Naive thymus-derived CD4-positive, alpha-beta T cell (primary cell): ENCODE measurements at regions of chr1 and their contacts with region 1.

Region 1: DNA sequence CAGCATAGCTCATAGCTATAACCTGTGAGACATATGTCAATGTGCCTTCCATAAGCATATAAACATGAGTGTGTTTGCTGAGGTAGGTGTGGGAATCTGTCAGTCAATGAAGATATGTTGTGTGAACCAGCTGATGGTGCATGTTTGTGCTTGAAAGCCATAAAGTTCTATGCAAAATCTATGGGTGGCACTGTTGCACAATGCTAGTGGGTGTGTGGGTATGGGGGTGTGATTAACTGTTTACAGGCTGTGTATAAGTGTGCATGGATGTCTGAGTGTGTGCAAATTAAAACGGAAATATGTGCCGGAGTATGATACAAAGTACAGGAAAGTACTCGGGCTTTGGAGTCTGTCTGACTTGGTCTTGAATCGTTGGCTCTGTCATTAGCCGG is 1.0 kb upstream of the ATP2B4 start:
- DNase-seq: peak in 8 of 9 donors; percentile 54 to 88 (median 84)
- ATAC-seq: peak; percentile 82
- H3K4me3 ChIP-seq: peak overlapping the region; percentile 71
- H3K4me3 Mint-ChIP-seq: peak overlapping the region; percentile 89 to 100 (median 98)
- H3K27ac ChIP-seq: peak overlapping the region; percentile 82
- H3K27ac Mint-ChIP-seq: peak overlapping the region; percentile 73 to 98 (median 96)
- H3K4me1 ChIP-seq: peaks cover 17% of the 10 kb centered on the region in 2 donors
- H3K4me1 Mint-ChIP-seq: peaks cover 28 to 66% (median 37%) of the 10 kb centered on the region in 7 donors
- H3K27me3 ChIP-seq: no peaks in the 10 kb centered on the region
- H3K27me3 Mint-ChIP-seq: no peaks in the 10 kb centered on the region

Region 2: GRCh38 chr1:202315576-202316168 is 1310.0 kb before region 1 on chr1:
- CTCF ChIA-PET with region 1: no interaction called
- POLR2A ChIA-PET with region 1: no interaction called
- intact Hi-C with region 1: no loop called
- DNase-seq: peak; percentile 42 to 74 (median 64)
- ATAC-seq: peak; percentile 88
- H3K4me3 ChIP-seq: no peak overlapping the region
- H3K4me3 Mint-ChIP-seq: no peak overlapping the region
- H3K27ac ChIP-seq: no peak overlapping the region
- H3K27ac Mint-ChIP-seq: no peak overlapping the region
- H3K4me1 ChIP-seq: no peaks in the 10 kb centered on the region
- H3K4me1 Mint-ChIP-seq: peaks cover 0 to 10% (median 0%) of the 10 kb centered on the region in 7 donors
- H3K27me3 ChIP-seq: no peaks in the 10 kb centered on the region
- H3K27me3 Mint-ChIP-seq: peaks cover 0 to 33% (median 0%) of the 10 kb centered on the region in 5 donors

Region 3: GRCh38 chr1:203273206-203273868 is 352.3 kb before region 1 on chr1:
- CTCF ChIA-PET with region 1: interaction called, 6 read pairs
- POLR2A ChIA-PET with region 1: interaction called, 4 read pairs
- intact Hi-C with region 1: loop called in 1 of 2 experiments (anchors 1 kb)
- DNase-seq: peak; percentile 84 to 95 (median 91)
- ATAC-seq: peak; percentile 82
- H3K4me3 ChIP-seq: peak overlapping the region; percentile 55
- H3K4me3 Mint-ChIP-seq: peak overlapping the region; percentile 76 to 83 (median 80)
- H3K27ac ChIP-seq: peak overlapping the region; percentile 75
- H3K27ac Mint-ChIP-seq: peak overlapping the region; percentile 83 to 98 (median 94)
- H3K4me1 ChIP-seq: peaks cover 11 to 64% of the 10 kb centered on the region in 2 donors
- H3K4me1 Mint-ChIP-seq: peaks cover 20 to 71% (median 65%) of the 10 kb centered on the region in 7 donors
- H3K27me3 ChIP-seq: no peaks in the 10 kb centered on the region
- H3K27me3 Mint-ChIP-seq: no peaks in the 10 kb centered on the region

Region 4: GRCh38 chr1:203299169-203299568 is 326.5 kb before region 1 on chr1:
- CTCF ChIA-PET with region 1: no interaction called
- POLR2A ChIA-PET with region 1: no interaction called
- intact Hi-C with region 1: no loop called
- DNase-seq: no peak
- ATAC-seq: peak; percentile 47
- H3K4me3 ChIP-seq: no peak overlapping the region
- H3K4me3 Mint-ChIP-seq: no peak overlapping the region
- H3K27ac ChIP-seq: no peak overlapping the region
- H3K27ac Mint-ChIP-seq: peak overlapping the region in 6 of 9 donors; percentile 7 to 68 (median 47)
- H3K4me1 ChIP-seq: peaks cover 4 to 8% of the 10 kb centered on the region in 2 donors
- H3K4me1 Mint-ChIP-seq: peaks cover 49 to 81% (median 65%) of the 10 kb centered on the region in 7 donors
- H3K27me3 ChIP-seq: no peaks in the 10 kb centered on the region
- H3K27me3 Mint-ChIP-seq: no peaks in the 10 kb centered on the region

Region 5: GRCh38 chr1:203326830-203327683 is 298.6 kb before region 1 on chr1:
- CTCF ChIA-PET with region 1: no interaction called
- POLR2A ChIA-PET with region 1: interaction called, 7 read pairs
- intact Hi-C with region 1: loop called (anchors 5 kb)
- DNase-seq: peak; percentile 90 to 96 (median 94)
- ATAC-seq: peak; percentile 84
- H3K4me3 ChIP-seq: peak overlapping the region; percentile 72
- H3K4me3 Mint-ChIP-seq: peak overlapping the region; percentile 80 to 89 (median 86)
- H3K27ac ChIP-seq: peak overlapping the region; percentile 98
- H3K27ac Mint-ChIP-seq: peak overlapping the region; percentile 90 to 100 (median 99)
- H3K4me1 ChIP-seq: peaks cover 55 to 56% of the 10 kb centered on the region in 2 donors
- H3K4me1 Mint-ChIP-seq: peaks cover 40 to 73% (median 70%) of the 10 kb centered on the region in 7 donors
- H3K27me3 ChIP-seq: no peaks in the 10 kb centered on the region
- H3K27me3 Mint-ChIP-seq: no peaks in the 10 kb centered on the region

Region 6: DNA sequence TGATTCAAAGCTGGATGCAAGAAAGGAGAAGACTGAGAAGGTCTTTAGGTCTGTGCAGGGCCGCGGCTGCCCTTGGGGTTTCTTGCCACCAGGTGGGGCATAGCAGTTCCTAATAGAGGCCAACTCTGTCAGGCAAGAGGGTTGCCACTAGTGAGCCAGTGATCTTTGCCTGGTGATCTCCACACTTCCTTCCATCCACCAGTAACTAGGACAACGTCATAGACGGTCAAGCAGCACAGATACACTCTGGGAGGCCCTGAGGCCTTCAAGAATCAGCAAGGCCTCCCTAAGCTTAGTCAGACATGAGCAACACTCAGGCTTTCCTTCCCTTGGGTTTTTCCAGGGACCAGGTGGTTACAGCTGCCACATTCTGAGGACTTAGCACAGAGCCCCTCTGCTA is 31.9 kb before region 1 on chr1:
- CTCF ChIA-PET with region 1: interaction called, 11 read pairs
- POLR2A ChIA-PET with region 1: interaction called, 12 read pairs
- intact Hi-C with region 1: loop called (anchors 1 to 5 kb)
- DNase-seq: peak in 7 of 9 donors; percentile 17 to 42 (median 25)
- ATAC-seq: peak; percentile 79
- H3K4me3 ChIP-seq: no peak overlapping the region
- H3K4me3 Mint-ChIP-seq: no peak overlapping the region
- H3K27ac ChIP-seq: no peak overlapping the region
- H3K27ac Mint-ChIP-seq: peak overlapping the region in 4 of 9 donors; percentile 20 to 70 (median 50)
- H3K4me1 ChIP-seq: no peaks in the 10 kb centered on the region
- H3K4me1 Mint-ChIP-seq: peaks cover 0 to 32% (median 7%) of the 10 kb centered on the region in 7 donors
- H3K27me3 ChIP-seq: no peaks in the 10 kb centered on the region
- H3K27me3 Mint-ChIP-seq: peaks cover 0 to 4% (median 0%) of the 10 kb centered on the region in 5 donors

Region 7: GRCh38 chr1:203673550-203674427 is 48.2 kb after region 1 on chr1:
- CTCF ChIA-PET with region 1: interaction called, 18 read pairs
- POLR2A ChIA-PET with region 1: interaction called, 48 read pairs
- intact Hi-C with region 1: loop called (anchors 1 kb)
- DNase-seq: peak; percentile 27 to 79 (median 73)
- ATAC-seq: peak; percentile 91
- H3K4me3 ChIP-seq: no peak overlapping the region
- H3K4me3 Mint-ChIP-seq: peak overlapping the region; percentile 57 to 87 (median 77)
- H3K27ac ChIP-seq: peak overlapping the region; percentile 53
- H3K27ac Mint-ChIP-seq: peak overlapping the region; percentile 87 to 99 (median 95)
- H3K4me1 ChIP-seq: peaks cover 52 to 54% of the 10 kb centered on the region in 2 donors
- H3K4me1 Mint-ChIP-seq: peaks cover 50 to 81% (median 71%) of the 10 kb centered on the region in 7 donors
- H3K27me3 ChIP-seq: no peaks in the 10 kb centered on the region
- H3K27me3 Mint-ChIP-seq: no peaks in the 10 kb centered on the region

Region 8: GRCh38 chr1:203769505-203770343 is 144.1 kb after region 1 on chr1:
- CTCF ChIA-PET with region 1: interaction called, 13 read pairs
- POLR2A ChIA-PET with region 1: interaction called, 6 read pairs
- intact Hi-C with region 1: loop called (anchors 2 kb)
- DNase-seq: no peak
- ATAC-seq: peak; percentile 52
- H3K4me3 ChIP-seq: no peak overlapping the region
- H3K4me3 Mint-ChIP-seq: peak overlapping the region in 7 of 10 donors; percentile 13 to 96 (median 52)
- H3K27ac ChIP-seq: no peak overlapping the region
- H3K27ac Mint-ChIP-seq: peak overlapping the region; percentile 68 to 99 (median 90)
- H3K4me1 ChIP-seq: peaks cover 21% of the 10 kb centered on the region in 2 donors
- H3K4me1 Mint-ChIP-seq: peaks cover 25 to 64% (median 35%) of the 10 kb centered on the region in 7 donors
- H3K27me3 ChIP-seq: no peaks in the 10 kb centered on the region
- H3K27me3 Mint-ChIP-seq: no peaks in the 10 kb centered on the region

Region 9: DNA sequence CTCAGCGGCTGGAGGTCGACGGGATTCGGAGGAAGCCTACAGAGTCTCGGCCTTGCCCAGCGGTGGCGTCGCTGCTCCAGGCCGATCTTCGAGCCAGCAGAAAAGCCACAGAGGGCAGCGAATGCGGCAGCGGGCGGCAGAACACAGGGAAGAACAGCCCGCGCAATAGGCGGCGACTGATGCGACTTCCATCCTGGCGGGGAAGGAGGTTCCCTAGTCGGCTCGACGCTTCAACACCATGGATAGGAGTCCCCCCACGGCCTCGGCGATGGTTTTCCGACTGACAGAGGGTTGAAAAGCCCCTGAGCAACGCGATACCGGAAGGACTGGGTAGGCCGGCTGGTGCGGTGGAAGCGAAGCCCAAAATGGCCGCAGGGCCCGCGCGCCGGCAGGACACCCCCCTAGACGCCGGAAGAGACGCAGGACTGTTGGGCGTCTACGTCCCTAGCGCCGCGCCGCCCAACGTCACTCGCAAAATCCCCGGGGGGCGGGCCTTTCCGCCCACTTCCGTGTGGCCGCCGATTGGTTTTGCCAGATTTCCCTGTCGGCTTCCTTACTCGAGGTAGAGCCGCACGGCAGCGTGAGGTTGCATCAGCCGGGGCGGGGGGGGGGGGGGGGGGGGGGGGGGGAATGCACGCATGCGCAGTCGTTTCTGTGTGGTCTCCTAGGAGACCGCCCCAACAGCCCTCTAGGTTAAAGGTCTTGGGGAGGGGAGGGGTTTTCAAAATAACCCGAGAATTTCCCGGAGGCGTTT is 786.0 kb after region 1 on chr1 and contains the start of gene PPP1R15B:
- CTCF ChIA-PET with region 1: no interaction called
- POLR2A ChIA-PET with region 1: no interaction called
- intact Hi-C with region 1: loop called in 1 of 2 experiments (anchors 5 kb)
- DNase-seq: peak; percentile 92 to 99 (median 98)
- ATAC-seq: peak; percentile 91
- H3K4me3 ChIP-seq: peak within 1 kb of the TSS; percentile 99
- H3K4me3 Mint-ChIP-seq: peak within 1 kb of the TSS; percentile 92 to 99 (median 97)
- H3K27ac ChIP-seq: peak within 1 kb of the TSS; percentile 100
- H3K27ac Mint-ChIP-seq: peak within 1 kb of the TSS; percentile 97 to 100 (median 99)
- H3K4me1 ChIP-seq: peaks cover 0 to 5% of the 10 kb centered on the region in 2 donors
- H3K4me1 Mint-ChIP-seq: peaks cover 8 to 23% (median 14%) of the 10 kb centered on the region in 7 donors
- H3K27me3 ChIP-seq: no peaks in the 10 kb centered on the region
- H3K27me3 Mint-ChIP-seq: no peaks in the 10 kb centered on the region
- total RNA-seq, gene PPP1R15B: 69.5 to 175 (median 73.0) TPM